CD4-positive, alpha-beta T cell (primary cell): ENCODE measurements at regions of chrX and their contacts with region 1.

Region 1: GRCh38 chrX:123960042-123960611 is 1.4 kb upstream of the STAG2 start:
- DNase-seq: peak; percentile 83 to 95 (median 88)
- ATAC-seq: peak; percentile 64
- H3K4me3 ChIP-seq: peak overlapping the region; percentile 97
- H3K4me3 Mint-ChIP-seq: peak overlapping the region; percentile 98
- H3K27ac ChIP-seq: peak overlapping the region; percentile 93 to 99
- H3K27ac Mint-ChIP-seq: peak overlapping the region; percentile 93
- H3K4me1 ChIP-seq: peaks cover 7% of the 10 kb centered on the region
- H3K4me1 Mint-ChIP-seq: peaks cover 16% of the 10 kb centered on the region
- H3K27me3 ChIP-seq: no peaks in the 10 kb centered on the region
- H3K27me3 Mint-ChIP-seq: peaks cover 7% of the 10 kb centered on the region
- CTCF ChIP-seq: peak; percentile 73

Region 2: DNA sequence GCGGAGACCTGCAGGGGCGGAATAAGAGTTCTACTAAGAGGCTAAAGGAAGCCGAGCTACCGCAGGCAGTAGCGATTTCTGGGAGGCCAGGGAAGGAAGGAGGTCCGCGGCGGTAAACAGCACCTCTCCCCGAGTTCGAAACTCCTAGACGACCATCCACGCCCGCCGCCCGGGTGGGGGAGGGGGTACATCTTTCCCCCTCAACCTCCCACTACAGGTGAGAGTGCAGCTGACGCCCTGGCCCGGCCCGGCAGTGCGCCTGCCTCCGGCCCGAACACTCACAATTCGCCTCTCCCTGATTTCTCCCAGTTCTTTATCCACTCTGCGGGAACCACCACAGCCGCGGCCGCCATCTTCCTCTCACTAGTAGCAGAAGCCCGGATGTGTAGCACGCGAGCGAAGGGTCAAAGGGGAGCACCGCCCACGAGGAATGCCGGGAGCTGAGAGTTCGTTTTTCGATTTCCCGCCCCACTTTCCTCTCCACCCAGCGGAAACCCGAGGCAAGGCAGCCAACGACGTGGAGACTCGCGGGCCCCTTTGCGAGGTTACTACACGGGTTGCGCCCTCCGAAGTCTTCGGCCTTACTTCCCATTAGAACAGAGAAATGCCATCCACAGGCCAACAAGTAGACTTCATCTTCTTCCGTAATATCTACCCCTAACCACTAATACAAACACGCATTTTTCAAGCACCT is 227.3 kb before region 1 on chrX and contains the start of gene THOC2:
- CTCF ChIA-PET with region 1: no interaction called
- POLR2A ChIA-PET with region 1: interaction called, 3 read pairs
- intact Hi-C with region 1: loop called in 1 of 2 experiments (anchors 5 kb)
- DNase-seq: peak; percentile 54 to 90 (median 72)
- ATAC-seq: peak; percentile 96
- H3K4me3 ChIP-seq: peak within 1 kb of the TSS; percentile 73
- H3K4me3 Mint-ChIP-seq: peak within 1 kb of the TSS; percentile 94
- H3K27ac ChIP-seq: peak within 1 kb of the TSS in 1 of 2 donors; percentile 51
- H3K27ac Mint-ChIP-seq: peak within 1 kb of the TSS; percentile 82
- H3K4me1 ChIP-seq: peaks cover 16% of the 10 kb centered on the region
- H3K4me1 Mint-ChIP-seq: peaks cover 44% of the 10 kb centered on the region
- H3K27me3 ChIP-seq: no peaks in the 10 kb centered on the region
- H3K27me3 Mint-ChIP-seq: no peaks in the 10 kb centered on the region
- CTCF ChIP-seq: no peak
- total RNA-seq, gene THOC2: 61.1 to 62.8 TPM

Region 3: GRCh38 chrX:123797543-123798447 is 162.3 kb before region 1 on chrX:
- CTCF ChIA-PET with region 1: no interaction called
- POLR2A ChIA-PET with region 1: no interaction called
- intact Hi-C with region 1: no loop called
- DNase-seq: no peak
- ATAC-seq: no peak
- H3K4me3 ChIP-seq: no peak overlapping the region
- H3K4me3 Mint-ChIP-seq: no peak overlapping the region
- H3K27ac ChIP-seq: no peak overlapping the region
- H3K27ac Mint-ChIP-seq: no peak overlapping the region
- H3K4me1 ChIP-seq: peaks cover 3% of the 10 kb centered on the region
- H3K4me1 Mint-ChIP-seq: no peaks in the 10 kb centered on the region
- H3K27me3 ChIP-seq: no peaks in the 10 kb centered on the region
- H3K27me3 Mint-ChIP-seq: no peaks in the 10 kb centered on the region
- CTCF ChIP-seq: no peak

Region 4: DNA sequence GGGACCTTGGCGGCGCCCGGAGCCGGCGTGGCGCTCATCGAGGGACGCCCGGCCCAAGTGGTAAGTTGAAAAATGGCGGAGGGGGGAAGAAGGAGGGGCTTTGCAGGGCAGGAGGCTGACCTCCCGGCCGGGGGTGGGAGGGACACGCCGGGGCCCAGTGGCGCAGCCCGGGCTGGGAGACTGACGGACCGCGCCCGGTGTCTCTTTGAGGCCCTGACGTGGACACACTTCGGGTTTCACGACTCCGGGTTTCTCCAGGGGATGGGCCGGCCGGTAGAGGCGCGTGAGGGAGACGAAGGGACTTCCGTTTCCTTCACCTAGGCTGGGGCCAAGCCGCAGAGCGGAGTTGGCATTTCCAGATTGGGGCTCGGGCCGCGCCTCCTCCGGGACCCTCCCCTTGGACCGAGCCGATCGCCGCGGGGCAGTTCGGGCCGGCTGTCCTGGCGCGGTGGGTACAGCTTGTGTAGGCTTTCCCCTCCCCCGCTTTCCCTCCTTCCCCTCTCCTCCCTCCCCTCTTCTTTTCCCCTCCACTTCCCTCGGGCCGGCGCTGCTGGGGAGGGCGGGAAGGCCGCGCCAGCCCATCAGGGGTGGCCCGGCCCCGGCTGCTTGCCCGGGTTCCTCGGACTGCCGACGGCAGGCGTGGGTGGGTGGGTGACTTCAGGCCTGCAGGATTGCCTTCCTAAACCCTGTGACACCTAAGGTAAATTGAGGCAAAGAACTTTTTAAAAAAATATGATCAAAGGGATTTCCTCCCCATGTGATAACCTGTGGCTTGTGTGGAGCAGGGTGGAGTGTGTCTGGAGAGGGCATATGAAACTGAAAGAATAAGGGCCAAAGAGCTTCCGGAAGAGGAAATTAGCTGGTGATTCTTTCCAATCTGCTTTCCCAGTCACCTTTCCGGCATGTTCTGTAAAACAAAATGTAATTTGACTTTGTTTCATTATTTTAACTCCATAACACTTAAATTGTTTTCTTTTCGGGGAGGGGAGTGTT is 100.0 kb before region 1 on chrX and contains the start of gene XIAP:
- CTCF ChIA-PET with region 1: no interaction called
- POLR2A ChIA-PET with region 1: interaction called, 8 read pairs
- intact Hi-C with region 1: loop called in 1 of 2 experiments (anchors 2 kb)
- DNase-seq: peak; percentile 24 to 85 (median 48)
- ATAC-seq: peak; percentile 73
- H3K4me3 ChIP-seq: peak within 1 kb of the TSS; percentile 88
- H3K4me3 Mint-ChIP-seq: peak within 1 kb of the TSS; percentile 94
- H3K27ac ChIP-seq: peak within 1 kb of the TSS; percentile 89 to 93
- H3K27ac Mint-ChIP-seq: peak within 1 kb of the TSS; percentile 97
- H3K4me1 ChIP-seq: peaks cover 23% of the 10 kb centered on the region
- H3K4me1 Mint-ChIP-seq: peaks cover 16% of the 10 kb centered on the region
- H3K27me3 ChIP-seq: no peaks in the 10 kb centered on the region
- H3K27me3 Mint-ChIP-seq: no peaks in the 10 kb centered on the region
- CTCF ChIP-seq: no peak
- total RNA-seq, gene XIAP: 20.9 to 26.0 TPM

Region 5: DNA sequence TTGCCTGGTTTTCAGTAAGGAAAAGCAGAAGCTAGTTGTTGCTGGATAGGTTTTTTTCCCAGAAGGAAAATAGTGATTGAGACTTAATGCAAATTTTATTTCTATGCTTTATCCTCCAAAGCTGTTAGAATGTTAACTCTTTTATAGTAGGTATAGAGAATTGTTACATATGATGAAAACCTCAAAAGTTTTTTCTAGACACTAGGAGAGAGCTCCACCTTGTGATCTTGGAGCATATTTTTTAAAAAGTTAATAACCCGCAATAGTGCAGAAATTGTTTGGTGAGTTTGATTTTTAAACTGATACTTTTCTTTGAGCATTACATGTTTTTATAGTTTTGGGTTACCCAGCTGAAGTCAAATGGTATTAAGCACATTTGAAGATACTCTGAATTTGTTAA is 57.9 kb after region 1 on chrX:
- CTCF ChIA-PET with region 1: interaction called, 12 read pairs
- POLR2A ChIA-PET with region 1: interaction called, 9 read pairs
- intact Hi-C with region 1: loop called (anchors 1 kb)
- DNase-seq: peak in 3 of 14 experiments; percentile 14 to 24 (median 20)
- ATAC-seq: peak; percentile 55
- H3K4me3 ChIP-seq: no peak overlapping the region
- H3K4me3 Mint-ChIP-seq: no peak overlapping the region
- H3K27ac ChIP-seq: no peak overlapping the region
- H3K27ac Mint-ChIP-seq: peak overlapping the region; percentile 64
- H3K4me1 ChIP-seq: peaks cover 9% of the 10 kb centered on the region
- H3K4me1 Mint-ChIP-seq: peaks cover 50% of the 10 kb centered on the region
- H3K27me3 ChIP-seq: no peaks in the 10 kb centered on the region
- H3K27me3 Mint-ChIP-seq: no peaks in the 10 kb centered on the region
- CTCF ChIP-seq: peak; percentile 35

Region 6: GRCh38 chrX:124211312-124211942 is 251.3 kb after region 1 on chrX:
- CTCF ChIA-PET with region 1: interaction called, 3 read pairs
- POLR2A ChIA-PET with region 1: no interaction called
- intact Hi-C with region 1: loop called in 1 of 2 experiments (anchors 5 kb)
- DNase-seq: peak in 4 of 14 experiments; percentile 34 to 70 (median 66)
- ATAC-seq: peak; percentile 65
- H3K4me3 ChIP-seq: no peak overlapping the region
- H3K4me3 Mint-ChIP-seq: peak overlapping the region; percentile 35
- H3K27ac ChIP-seq: no peak overlapping the region
- H3K27ac Mint-ChIP-seq: peak overlapping the region; percentile 71
- H3K4me1 ChIP-seq: peaks cover 26% of the 10 kb centered on the region
- H3K4me1 Mint-ChIP-seq: peaks cover 43% of the 10 kb centered on the region
- H3K27me3 ChIP-seq: no peaks in the 10 kb centered on the region
- H3K27me3 Mint-ChIP-seq: no peaks in the 10 kb centered on the region
- CTCF ChIP-seq: peak; percentile 69